ENCODE measurements at regions of chr19 and their contacts with region 1.

Region 1: GRCh38 chr19:48618916-48619691 is at the starts of genes RPL18 and SPHK2:
- DNase-seq: peak; percentile 99
- ATAC-seq: peak; percentile 82
- H3K4me3 ChIP-seq: peak within 1 kb of the TSS; percentile 95 to 100 (median 99)
- H3K4me3 Mint-ChIP-seq: peak within 1 kb of the TSS; percentile 98
- H3K27ac ChIP-seq: peak within 1 kb of the TSS; percentile 87 to 91
- H3K27ac Mint-ChIP-seq: peak within 1 kb of the TSS; percentile 98
- H3K4me1 ChIP-seq: peaks cover 25 to 45% of the 10 kb centered on the region in 2 donors
- H3K4me1 Mint-ChIP-seq: peaks cover 51% of the 10 kb centered on the region
- H3K27me3 ChIP-seq: no peaks in the 10 kb centered on the region
- H3K27me3 Mint-ChIP-seq: no peaks in the 10 kb centered on the region
- CTCF ChIP-seq: no peak
- total RNA-seq, gene RPL18: 2,217 and 2,248 TPM in 2 replicates
- total RNA-seq, gene SPHK2: 45.4 and 47.3 TPM in 2 replicates

Region 2: DNA sequence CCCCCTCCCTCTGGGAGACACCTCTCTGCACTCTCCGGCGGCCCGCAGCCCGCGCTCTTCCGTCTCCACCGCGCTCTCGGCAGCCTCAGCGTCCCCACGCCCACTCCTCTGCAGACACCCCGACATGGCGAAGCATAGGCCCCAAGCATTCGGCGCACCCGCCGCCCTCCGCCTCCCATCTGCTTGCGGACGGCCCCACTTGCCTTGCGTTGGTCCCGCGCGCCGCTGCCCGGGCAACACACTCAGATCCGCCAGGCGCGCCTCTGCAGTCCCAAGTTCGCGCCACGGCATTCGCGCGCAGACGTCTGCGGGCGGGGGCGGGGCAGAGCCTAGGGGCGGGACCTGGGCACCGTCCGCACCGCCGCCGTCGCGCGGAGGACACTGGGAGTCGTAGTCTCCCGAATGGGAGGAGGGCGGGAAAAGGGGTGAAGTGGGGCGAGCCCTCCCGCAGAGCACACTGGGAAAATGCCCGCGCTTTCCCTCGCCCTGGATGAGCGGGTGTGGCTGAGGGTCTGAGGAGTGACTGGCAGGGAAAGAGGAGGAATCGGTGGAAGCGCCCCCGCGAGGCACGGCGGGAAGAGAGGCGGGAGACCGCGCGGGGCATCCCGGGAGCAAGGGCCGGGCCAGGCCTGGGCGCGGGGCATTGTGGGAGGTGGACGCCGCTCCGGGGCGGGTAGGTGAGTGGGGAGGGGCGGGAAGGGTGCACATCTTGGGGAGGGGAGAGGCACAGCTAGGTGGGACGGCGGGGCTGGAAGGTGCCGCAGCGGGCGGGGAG is 448.9 kb before region 1 on chr19 and contains the starts of genes LIG1 and ZSWIM9:
- CTCF ChIA-PET with region 1: no interaction called
- POLR2A ChIA-PET with region 1: interaction called, 3 read pairs
- intact Hi-C with region 1: loop called (anchors 1 kb)
- DNase-seq: peak; percentile 97
- ATAC-seq: peak; percentile 80
- H3K4me3 ChIP-seq: peak within 1 kb of the TSS; percentile 41 to 99 (median 90)
- H3K4me3 Mint-ChIP-seq: peak within 1 kb of the TSS; percentile 96
- H3K27ac ChIP-seq: peak within 1 kb of the TSS; percentile 86 to 87
- H3K27ac Mint-ChIP-seq: peak within 1 kb of the TSS; percentile 98
- H3K4me1 ChIP-seq: peaks cover 10 to 15% of the 10 kb centered on the region in 2 donors
- H3K4me1 Mint-ChIP-seq: peaks cover 25% of the 10 kb centered on the region
- H3K27me3 ChIP-seq: no peaks in the 10 kb centered on the region
- H3K27me3 Mint-ChIP-seq: no peaks in the 10 kb centered on the region
- CTCF ChIP-seq: no peak
- total RNA-seq, gene LIG1: 111 and 116 TPM in 2 replicates
- total RNA-seq, gene ZSWIM9: 11.8 and 15.7 TPM in 2 replicates

Region 3: DNA sequence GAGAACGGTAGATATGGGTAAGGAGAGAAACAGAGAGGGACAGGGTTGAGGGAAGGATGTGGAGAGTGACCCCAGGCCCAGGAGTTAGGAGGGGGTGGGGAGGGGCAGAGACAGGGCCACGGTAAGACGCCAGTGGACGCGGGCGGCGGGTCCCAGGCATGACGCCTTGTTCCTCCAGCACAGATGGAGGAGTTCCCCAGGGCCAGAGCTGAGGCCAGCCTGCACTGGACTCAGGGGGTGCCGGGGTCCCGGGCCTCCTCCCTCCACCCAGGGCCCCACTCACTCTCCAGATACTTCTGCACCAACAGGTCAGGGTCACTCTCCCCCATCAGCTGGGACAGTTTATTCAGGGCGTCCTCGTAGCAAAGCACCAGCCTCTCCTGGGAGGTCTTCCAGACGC is 315.7 kb before region 1 on chr19:
- CTCF ChIA-PET with region 1: no interaction called
- POLR2A ChIA-PET with region 1: no interaction called
- intact Hi-C with region 1: no loop called
- DNase-seq: no peak
- ATAC-seq: no peak
- H3K4me3 ChIP-seq: no peak overlapping the region
- H3K4me3 Mint-ChIP-seq: no peak overlapping the region
- H3K27ac ChIP-seq: no peak overlapping the region
- H3K27ac Mint-ChIP-seq: no peak overlapping the region
- H3K4me1 ChIP-seq: no peaks in the 10 kb centered on the region
- H3K4me1 Mint-ChIP-seq: no peaks in the 10 kb centered on the region
- H3K27me3 ChIP-seq: no peaks in the 10 kb centered on the region
- H3K27me3 Mint-ChIP-seq: peaks cover 9% of the 10 kb centered on the region
- CTCF ChIP-seq: no peak

Region 4: GRCh38 chr19:48433337-48433736 is 185.8 kb before region 1 on chr19:
- CTCF ChIA-PET with region 1: no interaction called
- POLR2A ChIA-PET with region 1: no interaction called
- intact Hi-C with region 1: no loop called
- DNase-seq: no peak
- ATAC-seq: no peak
- H3K4me3 ChIP-seq: no peak overlapping the region
- H3K4me3 Mint-ChIP-seq: no peak overlapping the region
- H3K27ac ChIP-seq: no peak overlapping the region
- H3K27ac Mint-ChIP-seq: no peak overlapping the region
- H3K4me1 ChIP-seq: no peaks in the 10 kb centered on the region
- H3K4me1 Mint-ChIP-seq: no peaks in the 10 kb centered on the region
- H3K27me3 ChIP-seq: peaks cover 0 to 13% (median 4%) of the 10 kb centered on the region in 4 experiments
- H3K27me3 Mint-ChIP-seq: peaks cover 34% of the 10 kb centered on the region
- CTCF ChIP-seq: no peak

Region 5: GRCh38 chr19:48445606-48446481 is 173.3 kb before region 1 on chr19 and contains the start of gene GRWD1:
- CTCF ChIA-PET with region 1: no interaction called
- POLR2A ChIA-PET with region 1: no interaction called
- intact Hi-C with region 1: loop called (anchors 1 kb)
- DNase-seq: peak; percentile 96
- ATAC-seq: peak; percentile 87
- H3K4me3 ChIP-seq: peak within 1 kb of the TSS; percentile 64 to 99 (median 94)
- H3K4me3 Mint-ChIP-seq: peak within 1 kb of the TSS; percentile 97
- H3K27ac ChIP-seq: peak within 1 kb of the TSS; percentile 88 to 91
- H3K27ac Mint-ChIP-seq: peak within 1 kb of the TSS; percentile 98
- H3K4me1 ChIP-seq: peaks cover 22 to 27% of the 10 kb centered on the region in 2 donors
- H3K4me1 Mint-ChIP-seq: peaks cover 40% of the 10 kb centered on the region
- H3K27me3 ChIP-seq: peaks cover 0 to 24% (median 11%) of the 10 kb centered on the region in 4 experiments
- H3K27me3 Mint-ChIP-seq: peaks cover 22% of the 10 kb centered on the region
- CTCF ChIP-seq: no peak
- total RNA-seq, gene GRWD1: 38.6 and 40.7 TPM in 2 replicates

Region 6: GRCh38 chr19:48468775-48469288 is 150.3 kb before region 1 on chr19:
- CTCF ChIA-PET with region 1: no interaction called
- POLR2A ChIA-PET with region 1: no interaction called
- intact Hi-C with region 1: loop called (anchors 1 kb)
- DNase-seq: peak; percentile 100
- ATAC-seq: peak; percentile 87
- H3K4me3 ChIP-seq: peak overlapping the region; percentile 8 to 90 (median 83)
- H3K4me3 Mint-ChIP-seq: peak overlapping the region; percentile 92
- H3K27ac ChIP-seq: peak overlapping the region; percentile 52 to 84
- H3K27ac Mint-ChIP-seq: peak overlapping the region; percentile 89
- H3K4me1 ChIP-seq: peaks cover 11 to 15% of the 10 kb centered on the region in 2 donors
- H3K4me1 Mint-ChIP-seq: peaks cover 17% of the 10 kb centered on the region
- H3K27me3 ChIP-seq: peaks cover 0 to 3% (median 0%) of the 10 kb centered on the region in 4 experiments
- H3K27me3 Mint-ChIP-seq: no peaks in the 10 kb centered on the region
- CTCF ChIP-seq: no peak

Region 7: DNA sequence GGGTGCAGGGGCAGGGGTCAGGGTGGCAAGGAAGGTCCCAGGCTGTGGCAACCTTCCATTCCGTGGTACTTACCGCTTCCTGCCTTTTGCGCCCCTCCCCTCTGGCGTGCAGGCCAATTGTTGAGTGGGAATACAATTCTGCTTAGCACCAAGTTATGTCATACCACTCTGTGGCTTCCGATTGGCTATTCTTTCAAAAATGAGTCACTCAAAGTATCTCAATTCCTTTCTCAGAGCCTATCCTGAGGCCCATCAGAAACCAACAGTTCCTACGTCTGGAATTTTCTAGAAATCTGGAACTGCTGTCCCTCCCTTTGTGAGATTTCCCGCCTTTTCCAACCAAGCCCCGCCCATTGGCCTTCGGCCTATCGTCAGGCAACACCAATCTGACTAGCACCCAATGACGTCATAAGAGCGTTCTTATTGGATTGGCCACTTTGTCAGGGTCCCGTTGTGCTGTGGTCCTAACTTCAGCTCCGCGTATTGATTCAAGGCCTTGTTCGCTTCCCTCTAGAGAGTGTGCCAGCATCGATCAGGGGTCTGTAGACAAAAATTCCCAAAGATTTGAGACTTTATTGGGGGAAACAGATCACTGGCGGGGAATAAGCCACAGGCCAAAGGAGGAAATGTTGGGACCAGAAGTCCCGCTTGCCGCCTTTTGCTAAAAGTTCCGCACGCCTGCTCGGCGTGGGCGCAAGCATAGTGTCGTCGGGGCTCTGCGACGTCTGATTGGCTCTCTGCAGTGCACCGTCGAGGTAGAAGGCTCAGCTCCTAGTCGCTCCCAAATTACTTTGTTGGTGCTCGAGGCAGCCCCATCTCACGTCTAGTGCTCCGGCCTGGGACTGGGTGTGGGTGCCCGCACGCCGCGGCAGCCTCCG is 42.0 kb after region 1 on chr19:
- CTCF ChIA-PET with region 1: no interaction called
- POLR2A ChIA-PET with region 1: no interaction called
- intact Hi-C with region 1: loop called (anchors 2 kb)
- DNase-seq: peak; percentile 94
- ATAC-seq: peak; percentile 93
- H3K4me3 ChIP-seq: peak overlapping the region in 4 of 5 experiments; percentile 30 to 56 (median 52)
- H3K4me3 Mint-ChIP-seq: peak overlapping the region; percentile 88
- H3K27ac ChIP-seq: peak overlapping the region; percentile 96 to 97
- H3K27ac Mint-ChIP-seq: peak overlapping the region; percentile 97
- H3K4me1 ChIP-seq: peaks cover 8 to 19% of the 10 kb centered on the region in 2 donors
- H3K4me1 Mint-ChIP-seq: peaks cover 16% of the 10 kb centered on the region
- H3K27me3 ChIP-seq: no peaks in the 10 kb centered on the region
- H3K27me3 Mint-ChIP-seq: no peaks in the 10 kb centered on the region
- CTCF ChIP-seq: no peak

Region 8: DNA sequence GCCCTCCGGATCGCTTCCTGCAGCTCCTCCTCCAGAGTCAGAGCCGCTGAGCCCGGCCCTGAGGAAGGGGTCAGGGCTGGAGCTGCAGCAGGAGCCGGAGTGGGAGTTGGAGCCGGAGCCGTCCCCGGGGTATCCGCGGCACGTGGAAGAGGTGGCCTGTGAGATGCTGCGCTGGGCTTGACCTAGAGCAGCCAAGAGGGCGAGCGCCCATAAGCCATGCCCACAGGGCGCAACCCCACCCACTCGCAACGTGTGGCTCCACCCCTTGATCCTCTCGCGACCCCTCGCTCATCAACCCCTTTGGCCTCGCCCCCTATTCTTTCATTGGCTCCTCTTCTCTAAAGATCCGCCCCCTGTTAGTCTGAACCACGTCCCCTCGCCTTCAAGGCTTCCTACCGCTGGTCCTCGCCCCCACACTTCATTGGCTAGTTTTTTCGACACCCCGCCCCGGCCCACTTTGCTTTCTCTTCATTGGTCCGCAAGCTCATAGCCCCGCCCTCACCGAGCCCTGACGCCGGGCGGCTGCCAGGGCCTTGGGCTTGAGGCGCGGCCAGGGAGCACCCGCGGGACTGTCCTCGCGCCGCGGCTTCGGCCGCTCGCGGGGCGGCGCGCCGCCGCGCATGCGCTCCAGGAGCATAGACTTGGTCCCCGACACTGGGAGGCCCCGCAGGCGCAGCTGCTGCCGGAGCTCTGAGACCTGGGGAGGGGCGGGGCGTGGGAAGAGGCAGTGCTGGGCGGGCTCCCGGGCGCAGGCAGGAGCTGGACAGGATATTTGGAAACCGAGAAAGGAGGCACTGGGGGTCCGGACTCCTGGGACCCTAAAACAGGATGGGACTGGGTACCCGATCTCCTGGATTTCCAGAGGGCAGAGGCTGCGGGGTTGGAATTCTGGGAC is 95.0 kb after region 1 on chr19:
- CTCF ChIA-PET with region 1: no interaction called
- POLR2A ChIA-PET with region 1: no interaction called
- intact Hi-C with region 1: loop called (anchors 1 kb)
- DNase-seq: peak; percentile 99
- ATAC-seq: peak; percentile 90
- H3K4me3 ChIP-seq: peak overlapping the region; percentile 39 to 86 (median 74)
- H3K4me3 Mint-ChIP-seq: peak overlapping the region; percentile 89
- H3K27ac ChIP-seq: peak overlapping the region; percentile 67 to 76
- H3K27ac Mint-ChIP-seq: peak overlapping the region; percentile 82
- H3K4me1 ChIP-seq: peaks cover 14 to 22% of the 10 kb centered on the region in 2 donors
- H3K4me1 Mint-ChIP-seq: peaks cover 21% of the 10 kb centered on the region
- H3K27me3 ChIP-seq: no peaks in the 10 kb centered on the region
- H3K27me3 Mint-ChIP-seq: no peaks in the 10 kb centered on the region
- CTCF ChIP-seq: no peak

Measured in B cell (primary cell).